ENCODE measurements at regions of chr11 and their contacts with region 1.

Region 1: GRCh38 chr11:76347466-76347865 is 33.5 kb downstream of the THAP12 start:
- DNase-seq: no peak
- ATAC-seq: no peak
- H3K4me3 ChIP-seq: no peak overlapping the region
- H3K4me3 Mint-ChIP-seq: no peak overlapping the region
- H3K27ac ChIP-seq: no peak overlapping the region
- H3K27ac Mint-ChIP-seq: no peak overlapping the region
- H3K4me1 ChIP-seq: no peaks in the 10 kb centered on the region
- H3K4me1 Mint-ChIP-seq: no peaks in the 10 kb centered on the region
- H3K27me3 ChIP-seq: no peaks in the 10 kb centered on the region
- H3K27me3 Mint-ChIP-seq: no peaks in the 10 kb centered on the region
- CTCF ChIP-seq: no peak

Region 2: DNA sequence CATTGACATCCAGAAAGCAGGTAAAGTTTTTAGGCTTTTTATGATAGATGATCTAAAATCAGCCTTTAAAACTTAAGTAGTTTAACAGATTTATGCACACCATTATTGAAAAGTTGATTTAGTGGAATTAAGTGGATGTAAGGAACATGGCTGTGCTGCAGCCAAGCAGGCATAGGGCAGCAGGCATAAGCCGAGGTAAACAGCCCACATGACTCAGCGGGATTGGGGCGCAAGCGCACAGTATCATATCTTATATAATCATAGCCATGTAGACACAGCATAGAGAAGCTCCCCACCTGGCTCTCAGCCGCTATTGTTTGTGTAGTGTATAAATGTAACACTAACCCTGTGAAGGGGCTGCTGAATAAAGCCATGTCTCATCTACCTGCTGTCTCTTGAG is 298.7 kb before region 1 on chr11:
- CTCF ChIA-PET with region 1: no interaction called
- POLR2A ChIA-PET with region 1: no interaction called
- intact Hi-C with region 1: loop called in 1 of 2 experiments (anchors 5 kb)
- DNase-seq: peak in 4 of 14 experiments; percentile 6 to 27 (median 14)
- ATAC-seq: no peak
- H3K4me3 ChIP-seq: no peak overlapping the region
- H3K4me3 Mint-ChIP-seq: no peak overlapping the region
- H3K27ac ChIP-seq: no peak overlapping the region
- H3K27ac Mint-ChIP-seq: no peak overlapping the region
- H3K4me1 ChIP-seq: no peaks in the 10 kb centered on the region
- H3K4me1 Mint-ChIP-seq: no peaks in the 10 kb centered on the region
- H3K27me3 ChIP-seq: no peaks in the 10 kb centered on the region
- H3K27me3 Mint-ChIP-seq: no peaks in the 10 kb centered on the region
- CTCF ChIP-seq: no peak

Region 3: DNA sequence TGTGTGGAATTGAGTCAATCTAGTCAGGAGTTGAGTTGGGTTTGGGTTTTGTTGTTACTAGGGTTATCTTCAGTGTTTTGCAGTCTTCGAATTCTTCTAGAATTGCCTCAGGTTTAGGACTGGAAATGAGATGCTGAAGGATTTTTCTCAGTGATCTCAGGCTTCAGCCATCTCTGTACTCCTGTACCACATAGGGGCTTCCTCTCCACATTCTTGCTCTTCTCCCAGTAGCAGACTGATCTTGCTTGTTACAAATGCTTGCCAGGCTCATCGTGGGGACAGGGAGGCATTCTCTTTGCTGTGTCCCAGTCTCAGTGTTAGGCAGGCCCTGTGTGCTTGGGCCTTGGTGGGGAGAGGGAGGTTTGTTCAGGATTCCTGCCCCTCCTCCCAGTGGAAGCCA is 226.9 kb after region 1 on chr11:
- CTCF ChIA-PET with region 1: no interaction called
- POLR2A ChIA-PET with region 1: no interaction called
- intact Hi-C with region 1: no loop called
- DNase-seq: no peak
- ATAC-seq: no peak
- H3K4me3 ChIP-seq: no peak overlapping the region
- H3K4me3 Mint-ChIP-seq: no peak overlapping the region
- H3K27ac ChIP-seq: no peak overlapping the region
- H3K27ac Mint-ChIP-seq: no peak overlapping the region
- H3K4me1 ChIP-seq: no peaks in the 10 kb centered on the region
- H3K4me1 Mint-ChIP-seq: no peaks in the 10 kb centered on the region
- H3K27me3 ChIP-seq: peaks cover 0 to 6% of the 10 kb centered on the region in 2 experiments
- H3K27me3 Mint-ChIP-seq: no peaks in the 10 kb centered on the region
- CTCF ChIP-seq: no peak